ENCODE measurements at regions of chr14 and their contacts with region 1.

Region 1: DNA sequence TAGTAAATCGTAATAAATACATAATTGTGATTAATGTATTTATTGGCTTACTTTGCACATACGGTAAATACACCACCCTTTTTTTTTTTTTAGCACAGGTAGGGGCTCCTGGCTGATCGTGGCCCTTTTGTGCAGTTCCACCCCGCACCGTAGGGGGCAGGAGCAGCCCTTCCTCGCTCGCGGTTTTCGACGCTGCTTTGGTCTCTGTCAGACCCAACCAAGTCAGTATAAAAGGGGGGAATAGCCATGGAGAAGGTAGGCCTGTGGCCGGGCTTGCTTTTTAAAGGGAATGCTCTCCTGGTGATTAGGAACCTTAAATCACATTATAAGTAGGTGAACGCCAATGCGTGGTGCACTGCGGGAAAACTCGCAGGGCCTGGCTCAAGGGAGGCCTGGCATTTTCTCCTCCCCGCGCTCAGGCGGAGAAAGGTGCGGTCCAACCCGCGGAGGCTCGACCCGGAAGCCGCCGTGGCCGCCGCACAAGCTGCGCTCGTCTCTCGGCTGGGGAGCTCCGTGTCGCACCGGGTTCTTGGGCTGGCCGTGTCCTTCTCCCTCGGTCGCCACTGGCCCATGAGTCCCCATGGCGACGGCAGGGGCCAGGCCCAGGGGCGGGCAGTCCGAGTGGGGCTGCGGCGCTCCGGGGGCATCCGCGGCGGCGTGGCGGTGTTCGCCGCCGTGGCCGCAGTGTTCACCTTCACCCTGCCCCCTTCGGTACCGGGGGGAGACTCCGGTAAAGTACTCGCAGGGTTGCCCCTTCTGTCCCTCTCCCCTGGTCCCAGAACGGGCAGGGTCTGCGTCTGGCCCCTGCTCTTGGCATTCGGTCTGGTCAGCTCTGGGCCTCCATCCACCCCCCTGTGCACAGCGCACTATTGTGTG is at the start of gene TMEM260:
- DNase-seq: peak; percentile 85
- H3K4me3 Mint-ChIP-seq: peak within 1 kb of the TSS; percentile 91
- H3K27ac Mint-ChIP-seq: peak within 1 kb of the TSS; percentile 90
- H3K4me1 Mint-ChIP-seq: peaks cover 26% of the 10 kb centered on the region
- H3K27me3 Mint-ChIP-seq: no peaks in the 10 kb centered on the region
- total RNA-seq, gene TMEM260: 15.9 and 16.8 TPM in 2 replicates

Region 2: DNA sequence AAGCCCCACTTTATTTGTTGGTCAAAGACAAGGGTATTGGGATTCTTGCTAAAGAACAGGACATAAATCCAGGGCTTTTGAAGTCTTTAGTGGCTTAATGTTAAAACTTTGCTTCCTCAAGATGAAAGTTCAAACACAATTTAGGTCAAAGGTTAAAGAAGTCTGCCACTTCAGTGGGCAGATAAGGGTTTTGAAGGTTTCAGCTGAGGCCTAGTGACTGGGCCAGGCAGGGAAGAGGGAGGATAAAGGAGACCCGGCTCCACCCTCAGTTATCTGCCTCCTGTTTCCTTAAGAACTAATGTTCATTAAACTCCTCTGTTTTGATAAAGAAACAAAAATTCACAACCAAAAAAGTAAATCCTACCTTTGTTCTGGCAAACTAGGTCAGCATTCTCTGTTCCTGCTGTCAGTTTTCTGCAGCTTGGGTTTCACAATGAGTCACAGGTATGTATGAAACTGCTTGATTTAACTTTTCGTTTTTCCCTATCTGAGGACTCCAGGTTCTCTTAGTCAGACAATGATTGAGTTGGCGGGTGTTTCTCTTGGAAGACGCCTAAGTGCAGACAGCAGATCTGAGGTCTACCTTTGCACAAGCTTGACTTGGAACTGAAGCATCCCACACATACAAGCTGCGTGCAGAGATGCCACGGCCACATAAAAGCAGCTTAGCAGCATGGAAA is 480.8 kb after region 1 on chr14:
- intact Hi-C with region 1: loop called (anchors 5 kb)
- DNase-seq: peak; percentile 9
- H3K4me3 Mint-ChIP-seq: no peak overlapping the region
- H3K27ac Mint-ChIP-seq: peak overlapping the region; percentile 41
- H3K4me1 Mint-ChIP-seq: peaks cover 19% of the 10 kb centered on the region
- H3K27me3 Mint-ChIP-seq: peaks cover 14% of the 10 kb centered on the region

Measured in activated T-helper 2 cell treated with anti-CD3 and anti-CD28 coated beads, Interferon-gamma antibody, Interleukin-2, Interleukin-4, amounts not matched to agents 10 μg/mL and 5 μg/mL and 100 μg/mL, durations not matched to agents 14 hours and 24 hours and 36 hours (primary cell).